ENCODE measurements at regions of chr10 and their contacts with region 1.

Region 1: GRCh38 chr10:99123851-99124250 is 111.8 kb downstream of the HPSE2 start:
- DNase-seq: peak in 1 of 4 experiments; percentile 7
- ATAC-seq: no peak
- H3K4me3 ChIP-seq: no peak overlapping the region
- H3K27ac ChIP-seq: no peak overlapping the region
- H3K4me1 ChIP-seq: no peaks in the 10 kb centered on the region
- H3K27me3 ChIP-seq: no peaks in the 10 kb centered on the region
- CTCF ChIP-seq: no peak
- EP300 ChIP-seq: no peak
- POLR2A ChIP-seq: no peak
- RAD21 ChIP-seq: no peak

Region 2: GRCh38 chr10:98971464-98971863 is 152.4 kb before region 1 on chr10:
- CTCF ChIA-PET with region 1: no interaction called
- POLR2A ChIA-PET with region 1: no interaction called
- in situ Hi-C with region 1: loop called (anchors 10 kb)
- intact Hi-C with region 1: no loop called
- DNase-seq: no peak
- ATAC-seq: no peak
- H3K4me3 ChIP-seq: no peak overlapping the region
- H3K27ac ChIP-seq: no peak overlapping the region
- H3K4me1 ChIP-seq: no peaks in the 10 kb centered on the region; a peak in 1 of 5 replicates
- H3K27me3 ChIP-seq: no peaks in the 10 kb centered on the region
- CTCF ChIP-seq: no peak
- EP300 ChIP-seq: no peak
- POLR2A ChIP-seq: no peak
- RAD21 ChIP-seq: no peak